ENCODE measurements at regions of chr3 and their contacts with region 1.

Region 1: GRCh38 chr3:118884748-118885206 is 149.9 kb downstream of the IGSF11 start:
- DNase-seq: peak; percentile 56 to 75
- ATAC-seq: peak; percentile 67 to 87 (median 83)
- H3K4me3 ChIP-seq: no peak overlapping the region
- H3K27ac ChIP-seq: no peak overlapping the region
- H3K4me1 ChIP-seq: no peaks in the 10 kb centered on the region
- H3K27me3 ChIP-seq: peaks cover 0 to 36% (median 14%) of the 10 kb centered on the region in 7 donors
- CTCF ChIP-seq: peak; percentile 54 to 94 (median 85)

Region 2: DNA sequence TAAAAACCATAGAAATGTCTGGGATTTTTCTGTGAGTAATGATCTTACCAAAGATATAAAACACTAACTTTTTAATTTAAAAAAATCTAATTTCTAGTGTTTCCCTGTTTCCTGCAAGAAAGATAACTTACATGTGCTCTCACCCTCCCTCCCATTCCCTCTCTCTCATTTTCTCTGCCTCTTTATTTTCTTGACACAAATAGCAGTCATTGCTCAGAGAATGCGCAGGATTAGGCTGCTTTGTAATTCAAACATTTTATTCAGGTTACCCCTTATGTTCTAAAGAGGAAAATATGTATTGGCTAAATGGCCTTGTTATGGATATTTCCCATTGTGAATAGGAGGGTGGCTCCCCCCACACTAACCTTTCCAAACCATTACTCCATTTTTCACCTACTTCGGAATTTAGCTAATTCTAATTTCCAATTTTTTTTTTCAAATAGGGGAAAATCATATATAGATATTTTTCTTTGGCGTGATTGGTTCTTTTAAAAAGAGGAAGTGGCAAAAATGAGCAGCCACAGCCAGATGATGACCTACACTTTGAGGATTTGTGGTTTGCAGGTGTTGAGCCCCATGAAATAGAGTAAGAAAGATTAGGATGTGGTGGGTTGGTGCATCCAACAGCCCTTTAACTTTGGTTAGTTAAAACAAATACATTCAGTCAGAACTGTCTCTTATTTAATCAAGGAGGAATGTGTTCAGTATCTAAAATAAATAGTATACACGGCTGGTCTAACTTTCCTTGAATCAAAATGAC is 404.5 kb before region 1 on chr3:
- intact Hi-C with region 1: no loop called
- DNase-seq: no peak
- ATAC-seq: no peak
- H3K4me3 ChIP-seq: no peak overlapping the region
- H3K27ac ChIP-seq: no peak overlapping the region
- H3K4me1 ChIP-seq: no peaks in the 10 kb centered on the region
- H3K27me3 ChIP-seq: peaks cover 0 to 3% (median 0%) of the 10 kb centered on the region in 7 donors
- CTCF ChIP-seq: no peak

Region 3: GRCh38 chr3:118782755-118783202 is 102.0 kb before region 1 on chr3:
- intact Hi-C with region 1: no loop called
- DNase-seq: no peak
- ATAC-seq: no peak
- H3K4me3 ChIP-seq: no peak overlapping the region
- H3K27ac ChIP-seq: no peak overlapping the region
- H3K4me1 ChIP-seq: no peaks in the 10 kb centered on the region
- H3K27me3 ChIP-seq: no peaks in the 10 kb centered on the region
- CTCF ChIP-seq: no peak

Region 4: DNA sequence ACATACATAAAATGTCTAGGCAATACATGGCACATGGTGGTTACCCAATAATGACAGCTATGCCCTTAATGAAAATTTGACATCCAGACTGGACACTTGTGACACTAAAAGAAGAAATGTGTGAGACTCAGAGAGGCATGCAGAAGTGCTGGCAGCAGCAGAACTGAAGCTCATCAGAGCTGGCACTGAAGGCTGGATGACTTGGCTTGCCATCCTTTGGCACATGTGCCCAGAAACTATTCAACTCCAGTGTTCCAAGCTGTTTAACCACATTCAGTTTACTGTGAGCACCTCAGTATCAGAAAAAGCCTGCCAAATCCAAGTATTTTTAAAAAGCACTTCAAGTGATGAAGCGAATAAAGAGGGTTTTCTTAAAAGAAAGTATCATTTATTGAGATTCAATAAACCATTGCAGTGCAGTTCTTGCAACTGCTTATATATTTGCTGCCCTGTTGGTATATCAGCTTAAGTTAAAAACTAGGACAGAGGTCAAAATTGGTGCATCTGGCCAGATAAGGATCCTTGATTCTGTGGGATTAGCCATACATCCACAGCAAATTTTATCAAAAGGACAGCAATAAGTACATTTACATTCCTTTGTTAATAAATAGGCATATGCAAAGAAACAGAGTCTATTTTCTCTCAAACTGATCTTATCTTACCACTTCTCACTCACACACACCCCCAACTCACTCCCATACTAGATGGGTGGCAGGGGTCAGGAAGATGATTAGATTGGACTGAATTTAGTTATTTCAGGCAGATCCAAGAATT is 134.1 kb after region 1 on chr3:
- intact Hi-C with region 1: no loop called
- DNase-seq: peak in 1 of 2 donors; percentile 11
- ATAC-seq: peak in 2 of 8 donors; percentile 55 to 85
- H3K4me3 ChIP-seq: no peak overlapping the region
- H3K27ac ChIP-seq: peak overlapping the region in 2 of 10 donors; percentile 7 to 33
- H3K4me1 ChIP-seq: no peaks in the 10 kb centered on the region
- H3K27me3 ChIP-seq: no peaks in the 10 kb centered on the region
- CTCF ChIP-seq: no peak

Region 5: DNA sequence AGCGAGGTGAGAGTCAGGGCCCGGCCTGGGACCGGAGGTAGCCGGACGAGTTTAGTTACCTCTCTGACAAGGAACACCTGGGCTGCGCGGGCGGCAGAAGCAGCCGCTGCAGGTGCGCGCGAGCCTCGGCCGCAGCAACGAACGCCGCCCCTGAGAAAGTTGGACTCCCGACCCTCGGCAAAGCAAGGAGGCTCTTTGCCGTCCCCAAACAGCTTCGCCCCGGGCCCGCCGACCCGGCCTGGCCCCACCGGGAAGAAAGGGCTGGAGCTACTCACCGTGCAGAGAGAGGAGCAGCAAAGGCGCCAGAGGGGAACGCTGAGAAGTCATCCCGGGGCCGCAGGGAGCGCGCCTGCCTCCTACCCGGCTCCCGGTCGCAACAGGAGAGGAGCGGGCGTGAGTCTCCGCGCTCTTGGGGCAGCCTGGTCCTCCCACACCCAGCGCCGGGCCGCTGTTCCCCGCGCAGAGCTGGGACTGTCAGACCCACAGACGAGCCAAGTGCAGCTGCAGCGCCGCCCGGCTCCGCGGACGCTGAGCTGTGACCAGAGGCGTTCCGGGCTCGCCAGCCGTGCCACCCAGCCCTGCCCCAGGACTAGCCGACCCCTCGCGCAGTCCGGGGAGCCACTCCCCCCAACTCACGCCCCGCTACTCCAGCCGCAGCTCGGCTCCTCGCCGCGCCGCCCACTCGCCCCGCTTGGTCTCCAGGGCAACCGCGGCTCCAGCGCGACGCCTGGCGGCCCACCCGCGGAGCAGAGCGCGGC is 149.7 kb after region 1 on chr3 and contains the start of gene IGSF11:
- intact Hi-C with region 1: loop called (anchors 1 to 10 kb)
- DNase-seq: peak; percentile 44 to 66
- ATAC-seq: peak; percentile 89 to 98 (median 93)
- H3K4me3 ChIP-seq: peak within 1 kb of the TSS; percentile 36 to 73 (median 64)
- H3K27ac ChIP-seq: peak within 1 kb of the TSS in 1 of 10 donors; percentile 22
- H3K4me1 ChIP-seq: peaks cover 0 to 13% (median 3%) of the 10 kb centered on the region in 9 donors
- H3K27me3 ChIP-seq: peaks cover 0 to 67% (median 47%) of the 10 kb centered on the region in 7 donors
- CTCF ChIP-seq: peak; percentile 33 to 79 (median 54)
- total RNA-seq, gene IGSF11: 0.45 to 6.1 (median 1.6) TPM

Region 6: DNA sequence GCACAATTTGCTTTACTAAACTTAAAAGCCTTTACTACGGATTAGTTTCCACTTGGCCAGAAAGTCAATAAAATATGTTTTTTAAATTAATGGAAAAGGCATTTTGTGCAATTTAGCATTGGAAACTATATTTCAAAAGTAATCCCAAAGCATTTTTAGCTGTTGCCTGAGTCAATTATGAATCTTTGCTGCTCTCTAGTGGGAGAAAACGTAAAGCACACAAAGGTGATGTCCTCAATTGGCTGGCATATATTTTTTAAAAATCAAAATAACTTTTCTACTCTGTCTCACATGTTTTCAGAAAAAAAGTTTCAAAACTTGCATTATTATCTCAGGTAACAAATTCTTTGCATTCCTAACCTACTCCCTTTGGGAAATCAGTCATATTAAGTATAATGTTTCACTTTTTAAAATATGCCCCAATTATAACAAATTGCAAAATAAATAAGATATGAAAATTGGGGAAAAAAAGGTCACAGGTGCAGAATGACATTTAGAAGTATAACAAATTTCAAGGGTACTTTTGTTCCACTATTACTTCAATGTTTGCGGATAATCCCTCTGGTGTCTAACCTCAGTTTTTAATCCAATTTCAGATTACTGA is 213.9 kb after region 1 on chr3:
- intact Hi-C with region 1: loop called (anchors 1 to 5 kb)
- DNase-seq: peak in 1 of 2 donors; percentile 19
- ATAC-seq: no peak
- H3K4me3 ChIP-seq: no peak overlapping the region
- H3K27ac ChIP-seq: no peak overlapping the region
- H3K4me1 ChIP-seq: no peaks in the 10 kb centered on the region
- H3K27me3 ChIP-seq: no peaks in the 10 kb centered on the region
- CTCF ChIP-seq: peak; percentile 19 to 79 (median 63)

Region 7: GRCh38 chr3:119240591-119241434 is 356.0 kb after region 1 on chr3 and contains the start of gene B4GALT4:
- intact Hi-C with region 1: loop called in 4 of 10 experiments (anchors 10 kb)
- DNase-seq: peak; percentile 86 to 89
- ATAC-seq: peak; percentile 95 to 97 (median 96)
- H3K4me3 ChIP-seq: peak within 1 kb of the TSS; percentile 57 to 90 (median 86)
- H3K27ac ChIP-seq: peak within 1 kb of the TSS; percentile 90 to 98 (median 93)
- H3K4me1 ChIP-seq: peaks cover 3 to 50% (median 34%) of the 10 kb centered on the region in 9 donors
- H3K27me3 ChIP-seq: no peaks in the 10 kb centered on the region
- CTCF ChIP-seq: no peak
- total RNA-seq, gene B4GALT4: 9.0 to 14.6 (median 11.6) TPM

Measured in heart right ventricle (tissue), 16 donors.